ENCODE measurements at regions of chr22 and their contacts with region 1.

Region 1: GRCh38 chr22:19103880-19104821 is 18.1 kb downstream of the DGCR2 start:
- DNase-seq: peak in 2 of 4 experiments; percentile 22 to 51
- ATAC-seq: peak; percentile 8; the same call in 1 of the 3 replicates
- H3K4me3 ChIP-seq: no peak overlapping the region
- H3K27ac ChIP-seq: no peak overlapping the region
- H3K4me1 ChIP-seq: peaks cover 18 to 19% of the 10 kb centered on the region in 2 experiments
- H3K27me3 ChIP-seq: no peaks in the 10 kb centered on the region
- CTCF ChIP-seq: peak; percentile 10 to 30 (median 16); a peak in 3 of 6 replicates
- EP300 ChIP-seq: no peak
- POLR2A ChIP-seq: no peak
- RAD21 ChIP-seq: no peak

Region 2: DNA sequence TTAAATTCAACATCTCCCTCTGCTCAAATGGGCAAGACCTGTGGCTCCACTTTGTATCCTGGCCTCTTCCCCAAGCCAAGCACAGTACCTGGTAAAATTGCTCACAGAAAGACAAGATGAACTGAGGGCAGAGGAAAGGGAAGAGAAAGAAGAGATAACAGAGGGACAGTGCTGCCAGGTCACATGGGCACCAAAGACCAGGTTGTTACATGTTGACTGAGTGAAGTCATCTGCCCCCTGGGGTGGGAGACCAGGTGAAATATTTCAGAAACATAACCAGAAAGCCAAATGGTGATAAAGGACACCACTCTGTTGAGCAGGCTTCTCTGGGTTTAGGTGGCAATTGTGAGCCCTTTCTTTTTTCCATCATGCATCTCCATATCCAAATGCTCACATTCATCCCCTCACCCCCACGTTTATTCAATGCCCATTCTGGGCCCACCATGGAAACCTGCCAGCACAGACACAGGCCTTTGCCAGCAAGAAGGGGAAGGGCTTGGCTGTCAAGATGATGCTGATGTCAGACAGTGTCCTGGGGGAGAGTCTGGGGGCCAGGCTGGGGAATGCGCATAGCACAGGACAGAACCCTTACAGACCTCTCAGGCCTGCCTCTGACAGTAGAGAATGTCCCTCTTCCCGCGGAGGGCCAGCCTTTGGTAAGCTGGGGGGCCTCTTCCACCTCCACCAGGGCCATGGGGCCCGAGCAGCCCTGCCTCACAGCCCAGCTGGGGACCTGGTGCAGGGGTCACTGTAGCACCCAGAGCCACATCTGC is 33.6 kb before region 1 on chr22:
- CTCF ChIA-PET with region 1: no interaction called
- POLR2A ChIA-PET with region 1: no interaction called
- in situ Hi-C with region 1: no loop called
- intact Hi-C with region 1: no loop called
- DNase-seq: no peak
- ATAC-seq: no peak
- H3K4me3 ChIP-seq: no peak overlapping the region
- H3K27ac ChIP-seq: no peak overlapping the region
- H3K4me1 ChIP-seq: peaks cover 0 to 10% of the 10 kb centered on the region in 2 experiments; a peak in 1 of 5 replicates
- H3K27me3 ChIP-seq: no peaks in the 10 kb centered on the region
- CTCF ChIP-seq: no peak
- EP300 ChIP-seq: no peak
- POLR2A ChIP-seq: no peak
- RAD21 ChIP-seq: no peak

Region 3: GRCh38 chr22:19088866-19089595 is 15.1 kb before region 1 on chr22:
- CTCF ChIA-PET with region 1: no interaction called
- POLR2A ChIA-PET with region 1: interaction called, 15 read pairs
- in situ Hi-C with region 1: no loop called
- intact Hi-C with region 1: no loop called
- DNase-seq: peak in 1 of 4 experiments; percentile 39
- ATAC-seq: no peak
- H3K4me3 ChIP-seq: no peak overlapping the region
- H3K27ac ChIP-seq: no peak overlapping the region
- H3K4me1 ChIP-seq: peaks cover 7 to 18% of the 10 kb centered on the region in 2 experiments
- H3K27me3 ChIP-seq: no peaks in the 10 kb centered on the region
- CTCF ChIP-seq: no peak
- EP300 ChIP-seq: no peak
- POLR2A ChIP-seq: 0 out of 2 replicates have a peak, but pooled peaks have one; percentile 28
- RAD21 ChIP-seq: no peak

Region 4: DNA sequence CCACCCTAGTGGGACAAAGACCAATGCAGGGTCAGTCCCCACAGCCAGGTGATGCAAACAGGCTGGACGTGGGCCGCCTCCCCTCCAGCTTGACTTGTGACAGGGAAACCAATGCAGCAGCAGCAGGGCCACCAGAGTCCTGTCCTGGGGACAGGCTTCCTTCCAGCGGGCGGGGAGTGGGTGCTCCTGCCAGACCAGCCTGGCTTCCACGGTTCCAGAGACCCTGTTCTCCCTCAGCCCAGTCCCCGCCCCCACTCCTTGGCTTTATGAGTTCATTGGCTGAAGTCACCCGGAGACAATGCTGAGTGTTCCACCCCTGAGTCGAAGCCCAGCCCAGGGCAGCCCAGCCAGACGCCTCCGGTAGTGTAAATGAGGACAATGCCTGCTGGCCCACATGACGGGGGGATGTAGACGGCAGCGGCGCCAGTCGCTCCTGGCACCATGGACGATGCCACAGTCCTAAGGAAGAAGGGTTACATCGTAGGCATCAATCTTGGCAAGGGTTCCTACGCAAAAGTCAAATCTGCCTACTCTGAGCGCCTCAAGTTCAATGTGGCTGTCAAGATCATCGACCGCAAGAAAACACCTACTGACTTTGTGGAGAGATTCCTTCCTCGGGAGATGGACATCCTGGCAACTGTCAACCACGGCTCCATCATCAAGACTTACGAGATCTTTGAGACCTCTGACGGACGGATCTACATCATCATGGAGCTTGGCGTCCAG is 27.0 kb after region 1 on chr22 and contains the start of gene TSSK2:
- CTCF ChIA-PET with region 1: no interaction called
- POLR2A ChIA-PET with region 1: no interaction called
- in situ Hi-C with region 1: no loop called
- intact Hi-C with region 1: no loop called
- DNase-seq: no peak
- ATAC-seq: no peak
- H3K4me3 ChIP-seq: no peak within 1 kb of the TSS
- H3K27ac ChIP-seq: no peak within 1 kb of the TSS
- H3K4me1 ChIP-seq: peaks cover 0 to 45% of the 10 kb centered on the region in 2 experiments; a peak in 2 of 5 replicates
- H3K27me3 ChIP-seq: peaks cover 3 to 11% of the 10 kb centered on the region in 2 experiments; a peak in 4 of 5 replicates
- CTCF ChIP-seq: 0 out of 6 replicates have a peak, but pooled peaks of 1 of the 3 experiments have one; percentile 2
- EP300 ChIP-seq: no peak
- POLR2A ChIP-seq: no peak
- RAD21 ChIP-seq: no peak
- polyA plus RNA-seq, gene TSSK2: not detected

Region 5: GRCh38 chr22:19799322-19800190 is 695.4 kb after region 1 on chr22:
- CTCF ChIA-PET with region 1: no interaction called
- POLR2A ChIA-PET with region 1: no interaction called
- in situ Hi-C with region 1: no loop called
- intact Hi-C with region 1: no loop called
- DNase-seq: peak in 1 of 4 experiments; percentile 71
- ATAC-seq: peak; percentile 29
- H3K4me3 ChIP-seq: no peak overlapping the region
- H3K27ac ChIP-seq: no peak overlapping the region
- H3K4me1 ChIP-seq: peaks cover 0 to 58% of the 10 kb centered on the region in 2 experiments; a peak in 1 of 5 replicates
- H3K27me3 ChIP-seq: no peaks in the 10 kb centered on the region
- CTCF ChIP-seq: peak; percentile 10 to 24 (median 23); a peak in 2 of 6 replicates
- EP300 ChIP-seq: no peak
- POLR2A ChIP-seq: no peak
- RAD21 ChIP-seq: no peak